ENCODE measurements at regions of chr11 and their contacts with region 1.

Region 1: GRCh38 chr11:67468835-67469811 is at the start of gene TMEM134:
- DNase-seq: peak; percentile 57
- ATAC-seq: peak; percentile 83
- H3K4me3 ChIP-seq: peak within 1 kb of the TSS; percentile 86
- H3K27ac ChIP-seq: peak within 1 kb of the TSS; percentile 78
- H3K4me1 ChIP-seq: peaks cover 33% of the 10 kb centered on the region
- H3K27me3 ChIP-seq: no peaks in the 10 kb centered on the region
- CTCF ChIP-seq: peak; percentile 45 to 76 (median 64)
- EP300 ChIP-seq: peak in 1 of 2 experiments; percentile 46; a peak in 1 of 4 replicates
- POLR2A ChIP-seq: peak; percentile 88
- RAD21 ChIP-seq: peak; percentile 65
- polyA plus RNA-seq, gene TMEM134: 1.6 to 7.0 TPM

Region 2: DNA sequence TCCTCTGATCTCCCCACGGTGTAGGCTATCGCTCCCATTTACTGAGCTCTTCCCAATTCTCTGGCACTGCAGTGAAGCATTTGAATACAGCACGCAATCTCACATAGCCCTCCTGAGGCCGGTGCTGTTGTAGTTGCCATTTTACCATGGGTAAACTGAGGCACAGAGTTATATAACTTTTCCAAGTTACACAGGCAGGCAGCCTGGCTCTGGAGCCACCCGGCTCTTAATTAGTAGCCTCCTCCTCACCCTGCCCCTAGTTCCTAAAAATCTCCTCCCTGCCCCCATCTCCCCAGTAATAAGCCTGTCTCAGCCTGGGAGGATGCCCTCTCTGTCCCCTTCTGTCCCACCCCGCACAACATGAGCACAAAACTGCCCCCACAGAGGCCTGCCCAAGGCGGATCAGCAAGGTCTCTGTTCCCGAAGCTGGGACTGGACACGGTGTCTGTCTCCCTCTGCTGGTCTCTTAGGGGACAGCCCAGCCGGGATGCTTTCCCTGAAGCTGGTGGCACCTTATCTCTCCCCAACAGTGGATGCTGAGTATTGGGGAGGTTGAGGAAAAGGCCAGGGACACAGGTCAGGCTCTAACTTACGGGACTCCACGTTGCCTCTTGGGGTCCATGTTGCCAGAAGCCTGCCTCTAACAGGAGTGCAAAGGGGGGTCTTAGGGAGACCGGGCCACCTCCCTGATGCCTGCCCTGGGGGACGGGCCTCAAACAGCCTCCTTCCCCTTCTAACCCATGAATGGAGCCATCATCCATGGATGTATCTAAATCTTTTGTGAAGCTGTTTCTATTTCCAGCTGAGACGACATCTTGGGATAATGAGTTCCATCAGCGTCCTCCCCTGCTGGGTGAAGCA is 86.6 kb before region 1 on chr11:
- CTCF ChIA-PET with region 1: interaction called, 9 read pairs
- POLR2A ChIA-PET with region 1: interaction called, 13 read pairs
- RAD21 ChIA-PET with region 1: interaction called, 4 read pairs
- SMC1A ChIA-PET with region 1: interaction called, 3 read pairs
- in situ Hi-C with region 1: no loop called
- intact Hi-C with region 1: no loop called
- DNase-seq: no peak
- ATAC-seq: peak; percentile 93
- H3K4me3 ChIP-seq: no peak overlapping the region
- H3K27ac ChIP-seq: no peak overlapping the region
- H3K4me1 ChIP-seq: peaks cover 19% of the 10 kb centered on the region
- H3K27me3 ChIP-seq: peaks cover 0 to 3% of the 10 kb centered on the region in 2 experiments; a peak in 2 of 4 replicates
- CTCF ChIP-seq: peak; percentile 99; a peak in 5 of 6 replicates
- EP300 ChIP-seq: no peak
- POLR2A ChIP-seq: no peak
- RAD21 ChIP-seq: peak; percentile 99

Region 3: GRCh38 chr11:67409261-67409666 is 59.9 kb before region 1 on chr11:
- CTCF ChIA-PET with region 1: interaction called, 7 read pairs
- POLR2A ChIA-PET with region 1: interaction called, 72 read pairs
- RAD21 ChIA-PET with region 1: interaction called, 18 read pairs
- SMC1A ChIA-PET with region 1: interaction called, 46 read pairs
- in situ Hi-C with region 1: no loop called
- intact Hi-C with region 1: no loop called
- DNase-seq: no peak
- ATAC-seq: peak; percentile 77
- H3K4me3 ChIP-seq: peak overlapping the region; percentile 48; the same call in 1 of the 2 replicates
- H3K27ac ChIP-seq: peak overlapping the region; percentile 84
- H3K4me1 ChIP-seq: peaks cover 61% of the 10 kb centered on the region
- H3K27me3 ChIP-seq: no peaks in the 10 kb centered on the region
- CTCF ChIP-seq: no peak
- EP300 ChIP-seq: no peak; a peak in 1 of 4 replicates
- POLR2A ChIP-seq: peak; percentile 83
- RAD21 ChIP-seq: no peak

Region 4: GRCh38 chr11:67428052-67428914 is 40.8 kb before region 1 on chr11 and contains the start of gene RPS6KB2:
- CTCF ChIA-PET with region 1: no interaction called
- POLR2A ChIA-PET with region 1: interaction called, 22 read pairs
- RAD21 ChIA-PET with region 1: interaction called, 5 read pairs
- SMC1A ChIA-PET with region 1: no interaction called
- in situ Hi-C with region 1: no loop called
- intact Hi-C with region 1: no loop called
- DNase-seq: peak; percentile 95
- ATAC-seq: peak; percentile 85
- H3K4me3 ChIP-seq: peak within 1 kb of the TSS; percentile 100
- H3K27ac ChIP-seq: peak within 1 kb of the TSS; percentile 69
- H3K4me1 ChIP-seq: no peaks in the 10 kb centered on the region; the same call in 1 of the 2 replicates
- H3K27me3 ChIP-seq: no peaks in the 10 kb centered on the region
- CTCF ChIP-seq: no peak
- EP300 ChIP-seq: no peak
- POLR2A ChIP-seq: peak; percentile 87
- RAD21 ChIP-seq: no peak
- polyA plus RNA-seq, gene RPS6KB2: 0.39 to 2.3 TPM

Region 5: GRCh38 chr11:67458266-67458665 is 10.9 kb before region 1 on chr11:
- CTCF ChIA-PET with region 1: interaction called, 4 read pairs
- POLR2A ChIA-PET with region 1: interaction called, 20 read pairs
- RAD21 ChIA-PET with region 1: interaction called, 3 read pairs
- SMC1A ChIA-PET with region 1: interaction called, 7 read pairs
- in situ Hi-C with region 1: no loop called
- intact Hi-C with region 1: no loop called
- DNase-seq: no peak
- ATAC-seq: no peak
- H3K4me3 ChIP-seq: no peak overlapping the region
- H3K27ac ChIP-seq: no peak overlapping the region
- H3K4me1 ChIP-seq: peaks cover 19% of the 10 kb centered on the region
- H3K27me3 ChIP-seq: no peaks in the 10 kb centered on the region
- CTCF ChIP-seq: no peak
- EP300 ChIP-seq: no peak
- POLR2A ChIP-seq: no peak
- RAD21 ChIP-seq: no peak

Region 6: GRCh38 chr11:67482825-67483798 is 14.0 kb after region 1 on chr11 and contains the start of gene AIP:
- CTCF ChIA-PET with region 1: interaction called, 5 read pairs
- POLR2A ChIA-PET with region 1: interaction called, 62 read pairs
- RAD21 ChIA-PET with region 1: interaction called, 53 read pairs
- SMC1A ChIA-PET with region 1: interaction called, 35 read pairs
- in situ Hi-C with region 1: no loop called
- intact Hi-C with region 1: no loop called
- DNase-seq: peak; percentile 97
- ATAC-seq: peak; percentile 77
- H3K4me3 ChIP-seq: peak within 1 kb of the TSS; percentile 67
- H3K27ac ChIP-seq: peak within 1 kb of the TSS; percentile 70
- H3K4me1 ChIP-seq: peaks cover 43% of the 10 kb centered on the region
- H3K27me3 ChIP-seq: no peaks in the 10 kb centered on the region
- CTCF ChIP-seq: peak in 1 of 3 experiments; percentile 19; a peak in 1 of 6 replicates
- EP300 ChIP-seq: no peak
- POLR2A ChIP-seq: peak; percentile 78
- RAD21 ChIP-seq: no peak
- polyA plus RNA-seq, gene AIP: 12.6 to 29.7 TPM